WTC11 (cell line): ENCODE measurements at regions of chr16 and their contacts with region 1.

Region 1: GRCh38 chr16:75622761-75623605 is at the start of gene ADAT1:
- DNase-seq: peak; percentile 98
- ATAC-seq: peak; percentile 96
- H3K4me3 Mint-ChIP-seq: peak within 1 kb of the TSS; percentile 94
- H3K27ac Mint-ChIP-seq: peak within 1 kb of the TSS; percentile 96
- H3K4me1 Mint-ChIP-seq: peaks cover 15% of the 10 kb centered on the region
- H3K27me3 Mint-ChIP-seq: no peaks in the 10 kb centered on the region
- CTCF ChIP-seq: no peak
- total RNA-seq, gene ADAT1: 45.3 to 48.1 TPM (median 46.0 TPM) in 3 replicates

Region 2: DNA sequence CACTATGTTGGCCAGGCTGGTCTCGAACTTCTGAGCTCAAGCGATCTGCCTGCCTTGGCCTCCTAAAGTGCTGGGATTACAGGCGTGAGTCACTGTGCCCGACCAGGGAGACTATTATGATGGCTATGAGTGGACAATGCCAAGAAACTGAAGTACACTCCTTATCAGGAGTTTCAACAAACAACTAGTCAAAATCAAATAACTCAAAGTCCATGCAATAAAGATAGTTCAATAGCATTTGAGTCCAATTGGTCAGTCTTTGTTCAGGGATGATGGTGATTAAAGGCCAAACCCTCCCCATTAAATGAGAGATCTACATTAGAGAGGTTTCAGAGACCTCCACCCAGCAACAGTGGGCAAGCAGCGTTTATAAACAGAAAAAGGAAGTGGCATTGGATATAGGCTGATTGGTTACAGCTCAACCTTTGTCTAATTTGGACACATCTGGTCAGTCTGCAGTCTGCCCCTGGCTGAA is 95.1 kb before region 1 on chr16:
- CTCF ChIA-PET with region 1: interaction called, 3 read pairs
- POLR2A ChIA-PET with region 1: interaction called, 11 read pairs
- DNase-seq: no peak
- ATAC-seq: no peak
- H3K4me3 Mint-ChIP-seq: no peak overlapping the region
- H3K27ac Mint-ChIP-seq: no peak overlapping the region
- H3K4me1 Mint-ChIP-seq: no peaks in the 10 kb centered on the region
- H3K27me3 Mint-ChIP-seq: no peaks in the 10 kb centered on the region
- CTCF ChIP-seq: no peak

Region 3: DNA sequence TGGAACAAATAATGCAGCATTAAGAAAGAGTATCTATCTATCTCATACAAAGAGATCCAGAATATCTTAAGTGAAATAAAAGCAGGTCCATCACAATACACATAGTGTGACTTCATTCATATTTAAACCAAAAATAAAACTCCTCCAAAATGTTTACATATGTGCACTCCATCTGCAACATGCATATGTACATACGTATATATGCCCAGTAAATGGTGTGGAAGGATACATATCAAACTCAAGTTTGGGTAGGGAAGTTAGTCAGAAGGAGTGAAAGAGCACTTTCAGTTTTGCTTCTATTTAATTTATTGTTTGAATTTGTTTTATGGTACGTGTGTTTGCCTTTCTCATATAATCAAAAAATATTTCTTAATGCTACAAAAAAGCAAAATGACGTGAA is 12.1 kb after region 1 on chr16:
- CTCF ChIA-PET with region 1: no interaction called
- POLR2A ChIA-PET with region 1: no interaction called
- DNase-seq: no peak
- ATAC-seq: no peak
- H3K4me3 Mint-ChIP-seq: no peak overlapping the region
- H3K27ac Mint-ChIP-seq: no peak overlapping the region
- H3K4me1 Mint-ChIP-seq: no peaks in the 10 kb centered on the region
- H3K27me3 Mint-ChIP-seq: no peaks in the 10 kb centered on the region
- CTCF ChIP-seq: no peak

Region 4: DNA sequence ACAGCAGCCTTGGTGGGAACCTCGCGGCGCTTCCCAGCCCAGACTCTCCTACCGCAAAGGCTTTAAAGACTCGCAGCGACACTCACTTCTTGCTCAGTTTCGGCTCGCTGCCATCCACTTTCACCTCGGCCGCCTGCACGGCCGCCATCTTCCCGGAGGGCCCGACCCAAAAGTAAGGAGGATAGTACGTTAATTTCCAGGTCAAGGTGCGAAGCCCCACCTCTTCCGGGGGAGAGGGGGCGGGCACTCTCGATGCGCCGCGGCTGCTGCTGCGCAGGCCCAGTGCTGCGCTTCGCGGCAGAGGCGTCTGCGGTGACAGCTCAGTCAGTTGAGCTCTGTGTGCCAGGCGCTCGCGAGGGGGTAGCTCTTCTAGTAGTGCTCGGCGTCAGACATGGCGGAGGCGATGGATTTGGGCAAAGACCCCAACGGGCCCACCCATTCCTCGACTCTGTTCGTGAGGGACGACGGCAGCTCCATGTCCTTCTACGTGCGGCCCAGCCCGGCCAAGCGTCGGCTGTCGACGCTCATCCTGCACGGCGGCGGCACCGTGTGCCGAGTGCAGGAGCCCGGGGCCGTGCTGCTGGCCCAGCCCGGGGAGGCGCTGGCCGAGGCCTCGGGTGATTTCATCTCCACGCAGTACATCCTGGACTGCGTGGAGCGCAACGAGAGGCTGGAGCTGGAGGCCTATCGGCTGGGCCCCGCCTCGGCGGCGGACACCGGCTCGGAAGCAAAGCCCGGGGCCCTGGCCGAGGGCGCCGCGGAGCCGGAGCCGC is 24.7 kb after region 1 on chr16 and contains the starts of genes KARS1 and TERF2IP:
- CTCF ChIA-PET with region 1: interaction called, 6 read pairs
- POLR2A ChIA-PET with region 1: interaction called, 11 read pairs
- DNase-seq: peak; percentile 92
- ATAC-seq: peak; percentile 94
- H3K4me3 Mint-ChIP-seq: peak within 1 kb of the TSS; percentile 99
- H3K27ac Mint-ChIP-seq: peak within 1 kb of the TSS; percentile 99
- H3K4me1 Mint-ChIP-seq: peaks cover 33% of the 10 kb centered on the region
- H3K27me3 Mint-ChIP-seq: no peaks in the 10 kb centered on the region
- CTCF ChIP-seq: no peak
- total RNA-seq, gene KARS1: 163 to 199 TPM (median 169 TPM) in 3 replicates
- total RNA-seq, gene TERF2IP: 14.7 to 15.2 TPM (median 14.7 TPM) in 3 replicates